ENCODE measurements at regions of chr16 and their contacts with region 1.

Region 1: GRCh38 chr16:88864521-88864920 is 1.9 kb downstream of the PABPN1L start:
- DNase-seq: no peak

Region 2: GRCh38 chr16:88606148-88606757 is 258.3 kb before region 1 on chr16:
- intact Hi-C with region 1: loop called in 1 of 2 experiments (anchors 5 kb)
- DNase-seq: no peak

Region 3: GRCh38 chr16:88936556-88937205 is 72.2 kb after region 1 on chr16:
- intact Hi-C with region 1: loop called in 1 of 2 experiments (anchors 2 kb)
- DNase-seq: no peak

Measured in posterior vena cava (tissue), 2 donors.